Stomach (tissue), 19 donors: ENCODE measurements at regions of chr10 and their contacts with region 1.

Region 1: GRCh38 chr10:89793649-89794254 is 92.4 kb downstream of the KIF20B start:
- DNase-seq: peak in 1 of 2 donors; percentile 89
- H3K4me3 ChIP-seq: no peak overlapping the region
- H3K27ac ChIP-seq: no peak overlapping the region
- H3K4me1 ChIP-seq: no peaks in the 10 kb centered on the region
- H3K27me3 ChIP-seq: no peaks in the 10 kb centered on the region
- CTCF ChIP-seq: peak in 5 of 7 experiments; percentile 47 to 74 (median 59)
- EP300 ChIP-seq: no peak
- POLR2A ChIP-seq: no peak

Region 2: GRCh38 chr10:90504172-90504571 is 710.4 kb after region 1 on chr10:
- intact Hi-C with region 1: no loop called
- DNase-seq: no peak
- H3K4me3 ChIP-seq: no peak overlapping the region
- H3K27ac ChIP-seq: no peak overlapping the region
- H3K4me1 ChIP-seq: no peaks in the 10 kb centered on the region
- H3K27me3 ChIP-seq: no peaks in the 10 kb centered on the region
- CTCF ChIP-seq: no peak
- EP300 ChIP-seq: no peak
- POLR2A ChIP-seq: no peak

Region 3: GRCh38 chr10:90787393-90788198 is 993.8 kb after region 1 on chr10:
- intact Hi-C with region 1: loop called (anchors 10 kb)
- DNase-seq: peak in 1 of 2 donors; percentile 66
- H3K4me3 ChIP-seq: no peak overlapping the region
- H3K27ac ChIP-seq: no peak overlapping the region
- H3K4me1 ChIP-seq: no peaks in the 10 kb centered on the region
- H3K27me3 ChIP-seq: no peaks in the 10 kb centered on the region
- CTCF ChIP-seq: peak in 5 of 7 experiments; percentile 13 to 63 (median 47)
- EP300 ChIP-seq: no peak
- POLR2A ChIP-seq: no peak